Heart left ventricle (tissue), 16 donors: ENCODE measurements at regions of chr2 and their contacts with region 1.

Region 1: DNA sequence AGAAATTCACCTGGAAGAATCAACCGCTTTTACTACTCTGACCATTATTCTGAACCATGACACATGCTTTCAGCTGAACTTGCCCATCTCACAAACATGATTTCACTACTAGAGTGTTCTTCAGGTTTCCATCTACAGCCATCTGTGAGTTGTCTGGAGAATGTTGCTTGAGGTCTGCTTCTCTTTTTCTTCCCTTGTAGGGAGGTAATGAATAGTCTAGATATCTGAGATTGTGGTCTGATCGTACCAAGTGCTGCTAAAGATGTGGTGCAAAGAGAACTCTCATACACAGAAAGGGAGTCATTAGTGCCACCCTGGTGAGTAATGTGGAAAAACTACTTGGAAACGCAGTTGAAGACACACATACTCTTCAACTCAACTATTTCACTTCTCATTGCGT is 10.2 kb downstream of the SOWAHC start:
- DNase-seq: no peak
- ATAC-seq: no peak
- H3K4me3 ChIP-seq: no peak overlapping the region
- H3K27ac ChIP-seq: no peak overlapping the region
- H3K4me1 ChIP-seq: no peaks in the 10 kb centered on the region
- H3K27me3 ChIP-seq: peaks cover 0 to 6% (median 0%) of the 10 kb centered on the region in 9 donors
- CTCF ChIP-seq: no peak
- POLR2A ChIP-seq: no peak

Region 2: DNA sequence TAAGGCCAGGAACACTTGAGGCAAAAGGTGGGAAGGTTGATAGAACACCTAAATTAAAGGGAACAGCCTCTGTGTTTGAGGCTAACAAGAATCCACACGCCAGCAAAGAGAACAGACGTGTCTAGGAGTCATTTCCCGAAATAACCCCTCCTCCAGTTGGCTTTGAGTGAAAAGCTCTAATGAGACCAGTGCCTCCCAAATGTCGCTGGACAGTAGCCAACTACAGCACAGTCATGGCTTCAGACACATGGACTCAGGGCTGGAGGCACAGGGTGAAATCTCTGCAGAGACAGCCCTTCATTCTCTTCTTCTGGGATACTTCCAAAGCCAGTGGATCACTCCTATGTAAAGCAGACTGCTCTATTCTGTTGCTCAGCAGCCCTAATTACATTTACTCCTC is 39.4 kb after region 1 on chr2:
- intact Hi-C with region 1: loop called in 2 of 10 experiments (anchors 5 to 10 kb)
- DNase-seq: peak in 4 of 5 donors; percentile 64 to 89 (median 76)
- ATAC-seq: peak; percentile 57 to 97 (median 89)
- H3K4me3 ChIP-seq: no peak overlapping the region
- H3K27ac ChIP-seq: peak overlapping the region in 1 of 12 donors; percentile 8
- H3K4me1 ChIP-seq: peaks cover 0 to 12% (median 7%) of the 10 kb centered on the region in 12 donors
- H3K27me3 ChIP-seq: no peaks in the 10 kb centered on the region
- CTCF ChIP-seq: no peak
- POLR2A ChIP-seq: no peak